ENCODE measurements at regions of chr12 and their contacts with region 1.

Region 1: DNA sequence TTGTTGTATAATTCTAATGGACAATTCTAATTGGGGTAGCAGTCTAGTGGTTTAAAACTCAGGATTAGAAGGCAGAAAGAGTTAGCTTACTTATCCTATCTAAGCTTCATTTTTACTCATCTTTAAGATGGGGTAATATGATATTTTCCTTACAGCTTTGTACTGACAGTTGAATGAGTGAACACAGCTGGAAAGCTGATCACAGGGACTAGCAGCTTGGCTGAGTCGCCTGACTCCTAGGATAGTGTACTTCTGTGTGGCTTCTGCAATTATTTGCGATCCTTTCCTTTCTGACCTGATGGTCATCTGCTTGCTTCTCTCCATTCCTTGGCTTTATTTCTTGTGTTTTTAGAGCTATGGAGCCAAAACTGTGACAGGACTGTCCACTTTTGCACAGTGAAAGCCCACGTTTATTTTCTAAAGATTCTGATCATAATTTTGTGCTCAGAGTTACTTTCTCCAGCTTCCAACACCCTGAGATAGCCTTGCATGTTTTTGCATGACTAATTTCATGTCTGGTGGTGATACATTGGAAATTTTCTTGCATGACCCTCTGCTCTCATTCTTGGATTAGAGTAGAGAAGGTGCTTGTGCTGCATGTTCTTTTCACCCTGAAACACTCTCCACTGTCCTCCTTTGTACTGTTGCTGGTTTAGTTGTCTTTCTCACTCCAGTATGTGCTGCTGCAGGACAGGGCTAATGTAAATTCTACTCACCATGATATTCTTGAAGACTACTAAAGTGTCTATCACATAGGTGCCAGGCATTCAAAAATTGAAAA is 377.0 kb upstream of the ATP2B1 start:
- DNase-seq: no peak
- ATAC-seq: peak; percentile 49
- H3K4me3 Mint-ChIP-seq: no peak overlapping the region
- H3K27ac Mint-ChIP-seq: no peak overlapping the region
- H3K4me1 Mint-ChIP-seq: peaks cover 14% of the 10 kb centered on the region
- H3K27me3 Mint-ChIP-seq: no peaks in the 10 kb centered on the region

Region 2: GRCh38 chr12:89768586-89769486 is 316.8 kb before region 1 on chr12:
- CTCF ChIA-PET with region 1: no interaction called
- POLR2A ChIA-PET with region 1: no interaction called
- intact Hi-C with region 1: loop called in 1 of 2 experiments (anchors 5 kb)
- DNase-seq: peak; percentile 42
- ATAC-seq: peak; percentile 87
- H3K4me3 Mint-ChIP-seq: no peak overlapping the region
- H3K27ac Mint-ChIP-seq: peak overlapping the region; percentile 18
- H3K4me1 Mint-ChIP-seq: peaks cover 21% of the 10 kb centered on the region
- H3K27me3 Mint-ChIP-seq: no peaks in the 10 kb centered on the region